MCF 10A (cell line): ENCODE measurements at regions of chr5 and their contacts with region 1.

Region 1: DNA sequence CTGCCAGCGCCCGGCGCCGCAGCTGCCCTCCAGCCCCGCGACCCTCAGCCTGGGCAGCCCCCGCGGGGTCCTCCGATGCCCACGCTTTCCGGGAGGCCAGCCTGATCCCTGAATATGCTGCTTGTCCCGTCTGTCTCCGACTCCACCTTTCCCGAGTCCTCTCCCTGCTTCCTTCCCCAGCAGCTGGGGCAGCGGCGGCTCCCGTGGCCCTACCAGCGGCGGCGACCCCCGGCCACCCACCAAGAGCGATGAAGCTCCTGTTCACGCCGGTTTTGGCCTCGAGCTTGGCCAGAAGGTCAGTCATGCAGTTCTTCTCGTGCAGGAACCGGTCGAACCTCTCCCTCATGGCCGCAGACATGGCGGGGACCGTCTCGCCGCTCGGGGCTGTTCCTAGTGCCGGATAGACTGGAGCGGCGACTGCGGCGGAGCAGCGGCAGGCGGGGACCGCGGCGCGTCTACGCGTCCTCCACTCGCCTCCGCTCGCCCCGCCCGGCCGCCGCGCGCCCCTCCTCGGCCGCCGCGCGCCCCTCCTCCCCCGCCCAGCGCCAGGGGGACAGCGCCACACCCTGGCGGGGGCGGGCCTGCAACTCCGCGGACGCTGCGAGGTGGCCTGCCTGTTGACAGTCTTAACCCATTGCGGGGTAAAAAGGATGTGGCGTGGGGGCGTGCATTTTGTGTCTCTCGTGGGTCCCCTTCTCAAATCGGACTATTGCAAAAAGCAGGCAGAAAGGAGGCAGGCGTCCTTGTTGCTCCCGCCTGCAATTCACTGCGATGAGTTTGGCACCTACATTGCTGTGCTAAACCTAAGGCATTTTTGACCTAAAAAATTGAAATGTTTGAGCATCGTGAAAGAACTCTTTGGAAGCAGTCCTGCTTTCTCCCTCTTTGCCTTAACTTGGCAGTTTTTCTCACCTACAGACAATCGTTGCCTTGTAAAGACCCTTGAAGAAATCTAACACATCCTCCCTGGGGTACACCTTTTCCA is at the start of gene REEP5:
- DNase-seq: peak; percentile 75
- H3K4me3 Mint-ChIP-seq: peak within 1 kb of the TSS; percentile 99
- H3K27ac Mint-ChIP-seq: peak within 1 kb of the TSS; percentile 98
- H3K4me1 Mint-ChIP-seq: peaks cover 19% of the 10 kb centered on the region
- H3K27me3 Mint-ChIP-seq: no peaks in the 10 kb centered on the region
- CTCF ChIP-seq: peak; percentile 54
- total RNA-seq, gene REEP5: 64.8 and 65.2 TPM in 2 replicates

Region 2: DNA sequence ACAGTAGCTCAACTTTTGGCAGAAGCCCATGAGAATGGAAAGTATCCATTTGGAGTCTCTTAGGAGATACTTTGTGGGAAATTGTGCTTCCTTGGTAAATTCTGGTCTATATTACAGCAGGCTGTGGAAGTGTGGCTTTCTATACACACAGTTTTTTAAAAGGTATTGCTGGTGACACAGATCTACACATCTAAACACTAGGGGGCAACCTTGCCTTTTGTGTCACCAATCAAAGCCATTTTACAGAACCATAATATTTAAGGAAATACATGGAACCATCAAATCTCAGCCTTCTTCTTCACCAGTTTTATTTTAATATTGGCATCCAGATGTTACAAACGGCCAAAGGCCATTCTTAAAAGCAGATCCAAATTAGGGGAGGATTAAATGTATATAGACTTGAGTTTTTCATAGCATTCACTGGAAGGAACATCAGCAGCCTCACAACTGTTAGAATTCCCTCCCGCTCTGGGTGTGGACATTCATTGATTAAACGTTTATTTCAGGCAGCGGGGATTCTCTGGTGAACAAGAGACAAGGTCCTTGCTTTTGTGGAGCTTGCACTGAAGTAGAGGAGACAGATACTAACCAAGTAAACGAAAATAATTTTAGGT is 370.6 kb before region 1 on chr5:
- CTCF ChIA-PET with region 1: interaction called, 5 read pairs
- POLR2A ChIA-PET with region 1: no interaction called
- intact Hi-C with region 1: loop called (anchors 1 kb)
- DNase-seq: peak; percentile 69
- H3K4me3 Mint-ChIP-seq: no peak overlapping the region
- H3K27ac Mint-ChIP-seq: no peak overlapping the region
- H3K4me1 Mint-ChIP-seq: peaks cover 8% of the 10 kb centered on the region
- H3K27me3 Mint-ChIP-seq: no peaks in the 10 kb centered on the region
- CTCF ChIP-seq: peak; percentile 68

Region 3: GRCh38 chr5:112878760-112879159 is 43.4 kb before region 1 on chr5:
- CTCF ChIA-PET with region 1: interaction called, 5 read pairs
- POLR2A ChIA-PET with region 1: interaction called, 4 read pairs
- intact Hi-C with region 1: loop called (anchors 5 kb)
- DNase-seq: peak; percentile 56
- H3K4me3 Mint-ChIP-seq: peak overlapping the region; percentile 40
- H3K27ac Mint-ChIP-seq: peak overlapping the region; percentile 71
- H3K4me1 Mint-ChIP-seq: peaks cover 20% of the 10 kb centered on the region
- H3K27me3 Mint-ChIP-seq: no peaks in the 10 kb centered on the region
- CTCF ChIP-seq: no peak

Region 4: DNA sequence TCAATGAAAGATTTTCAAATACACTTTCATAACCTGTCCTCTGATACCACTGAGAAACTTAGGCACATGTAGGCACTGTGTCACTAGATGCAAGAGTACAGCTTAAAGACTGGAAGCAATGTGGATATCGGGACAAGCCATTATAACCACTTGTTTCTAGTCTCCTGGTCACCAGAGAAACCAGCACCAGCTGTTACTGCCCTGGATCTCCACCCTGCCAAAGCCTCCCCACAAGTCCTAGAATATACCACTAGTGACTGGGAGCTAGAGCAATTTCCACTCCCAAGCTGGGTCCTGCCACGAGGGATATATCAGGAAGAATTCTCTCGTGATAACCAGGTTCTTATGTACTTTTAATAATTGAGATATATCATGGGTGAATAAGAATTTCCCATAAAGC is 19.6 kb before region 1 on chr5:
- CTCF ChIA-PET with region 1: interaction called, 6 read pairs
- POLR2A ChIA-PET with region 1: interaction called, 16 read pairs
- intact Hi-C with region 1: no loop called
- DNase-seq: no peak
- H3K4me3 Mint-ChIP-seq: no peak overlapping the region
- H3K27ac Mint-ChIP-seq: no peak overlapping the region
- H3K4me1 Mint-ChIP-seq: peaks cover 4% of the 10 kb centered on the region
- H3K27me3 Mint-ChIP-seq: no peaks in the 10 kb centered on the region
- CTCF ChIP-seq: no peak

Region 5: DNA sequence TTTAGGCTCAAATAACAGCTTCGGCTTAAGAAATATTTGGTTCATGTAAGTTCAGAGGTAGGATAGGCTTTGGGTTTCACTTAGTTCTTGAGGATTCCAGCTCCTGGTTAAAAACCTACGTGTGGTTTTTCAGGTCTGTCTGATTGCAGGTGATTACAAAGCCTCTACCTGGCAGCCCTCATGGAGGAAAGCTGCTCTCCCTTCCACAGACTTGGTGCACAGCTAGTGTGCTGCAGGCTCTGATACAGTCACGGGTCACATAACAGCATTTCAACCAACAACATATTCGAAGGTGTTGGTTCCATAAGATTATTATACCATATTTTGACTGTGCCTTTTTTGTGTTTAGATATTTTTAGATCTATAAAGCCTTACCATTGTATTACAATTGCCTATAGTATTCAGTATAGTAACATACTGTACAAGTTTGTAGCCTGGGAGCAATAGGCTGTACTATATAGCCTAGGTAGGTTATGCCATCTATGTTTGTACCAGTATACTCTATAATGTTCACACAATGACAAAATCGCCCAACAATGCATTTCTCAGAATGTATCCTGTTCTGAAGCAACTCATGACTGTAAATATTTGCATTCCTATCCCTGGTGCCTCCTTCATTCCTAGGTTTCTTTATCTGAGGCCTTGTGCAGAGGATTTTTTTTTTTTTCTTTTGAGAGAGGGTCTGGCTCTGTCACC is 46.4 kb after region 1 on chr5:
- CTCF ChIA-PET with region 1: interaction called, 10 read pairs
- POLR2A ChIA-PET with region 1: interaction called, 22 read pairs
- intact Hi-C with region 1: loop called (anchors 1 kb)
- DNase-seq: no peak
- H3K4me3 Mint-ChIP-seq: no peak overlapping the region
- H3K27ac Mint-ChIP-seq: no peak overlapping the region
- H3K4me1 Mint-ChIP-seq: peaks cover 5% of the 10 kb centered on the region
- H3K27me3 Mint-ChIP-seq: no peaks in the 10 kb centered on the region
- CTCF ChIP-seq: no peak